HEK293T (cell line): ENCODE measurements at regions of chr14 and their contacts with region 1.

Region 1: GRCh38 chr14:76456200-76456599 is 80.3 kb downstream of the ESRRB start:
- DNase-seq: peak; percentile 71

Region 2: DNA sequence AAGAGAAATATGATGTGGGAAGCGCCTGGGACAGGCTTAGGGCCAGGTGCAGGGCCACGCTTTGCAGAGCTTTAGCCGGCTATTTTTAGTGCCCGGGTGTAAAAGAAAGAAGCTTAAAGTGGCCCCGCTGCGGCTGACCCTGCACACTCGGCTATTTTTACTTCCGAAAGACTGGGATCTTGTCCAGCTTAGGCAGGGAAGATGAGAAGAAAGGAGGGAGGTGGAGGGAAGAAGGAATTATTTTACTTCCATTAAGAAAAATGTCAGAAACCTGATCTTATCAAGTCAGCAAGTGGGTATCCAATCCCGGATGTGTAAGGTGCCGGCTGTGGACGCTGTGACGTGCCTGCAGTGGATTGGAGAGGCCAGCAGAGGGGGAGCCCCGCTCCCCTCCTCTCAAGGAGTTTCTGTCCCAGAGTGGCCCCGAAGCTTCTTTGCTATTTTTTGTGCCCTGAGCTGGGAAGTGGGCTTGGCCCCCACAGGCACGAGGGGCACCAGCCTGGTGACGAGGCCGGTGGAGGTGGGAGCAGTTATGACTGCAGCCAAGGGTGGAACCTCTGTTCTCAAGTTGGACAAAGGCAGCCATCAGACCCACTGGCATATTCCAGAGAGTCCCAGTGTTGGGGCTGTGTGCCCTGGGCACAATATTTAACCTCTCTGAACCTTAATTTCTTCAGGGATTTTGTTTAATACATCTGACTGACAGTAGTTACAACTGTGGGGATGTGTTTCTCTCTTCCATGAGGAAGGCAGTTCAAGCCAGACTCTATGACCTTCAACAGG is 17.5 kb after region 1 on chr14:
- CTCF ChIA-PET with region 1: interaction called, 14 read pairs
- POLR2A ChIA-PET with region 1: no interaction called
- DNase-seq: peak; percentile 57

Region 3: GRCh38 chr14:76486251-76486743 is 30.1 kb after region 1 on chr14:
- CTCF ChIA-PET with region 1: interaction called, 11 read pairs
- POLR2A ChIA-PET with region 1: no interaction called
- DNase-seq: peak; percentile 64